ENCODE measurements at regions of chr5 and their contacts with region 1.

Region 1: GRCh38 chr5:108003178-108003577 is 332.4 kb upstream of the EFNA5 start:
- DNase-seq: peak in 5 of 9 donors; percentile 3 to 27 (median 12)
- ATAC-seq: peak; percentile 66
- H3K4me3 ChIP-seq: no peak overlapping the region
- H3K4me3 Mint-ChIP-seq: peak overlapping the region in 9 of 10 donors; percentile 3 to 82 (median 55)
- H3K27ac ChIP-seq: no peak overlapping the region
- H3K27ac Mint-ChIP-seq: peak overlapping the region in 8 of 9 donors; percentile 21 to 72 (median 44)
- H3K4me1 ChIP-seq: peaks cover 0 to 7% of the 10 kb centered on the region in 2 donors
- H3K4me1 Mint-ChIP-seq: peaks cover 6 to 22% (median 14%) of the 10 kb centered on the region in 7 donors
- H3K27me3 ChIP-seq: no peaks in the 10 kb centered on the region
- H3K27me3 Mint-ChIP-seq: no peaks in the 10 kb centered on the region

Region 2: DNA sequence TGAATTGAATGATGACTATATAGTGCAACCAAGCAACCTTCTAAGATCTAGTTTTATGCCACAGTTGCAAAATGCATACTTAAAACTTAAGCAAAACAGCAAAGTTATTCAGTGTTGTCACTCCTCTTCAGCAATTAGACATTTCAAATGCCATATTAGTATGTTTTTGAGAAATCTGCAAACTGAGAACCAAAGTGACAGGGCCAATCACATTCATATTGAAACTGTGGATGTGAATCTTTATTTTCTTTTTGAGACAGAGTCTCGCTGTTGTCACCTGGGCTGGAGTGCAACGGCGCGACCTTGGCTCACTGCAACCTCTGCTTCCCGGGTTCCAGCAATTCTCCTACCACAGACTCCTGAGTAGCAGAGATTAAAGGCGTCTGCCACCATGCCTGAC is 83.2 kb before region 1 on chr5:
- CTCF ChIA-PET with region 1: no interaction called
- POLR2A ChIA-PET with region 1: no interaction called
- intact Hi-C with region 1: loop called in 1 of 2 experiments (anchors 2 kb)
- DNase-seq: no peak
- ATAC-seq: no peak
- H3K4me3 ChIP-seq: no peak overlapping the region
- H3K4me3 Mint-ChIP-seq: peak overlapping the region in 1 of 10 donors; percentile 13
- H3K27ac ChIP-seq: no peak overlapping the region
- H3K27ac Mint-ChIP-seq: peak overlapping the region in 1 of 9 donors; percentile 4
- H3K4me1 ChIP-seq: peaks cover 0 to 5% of the 10 kb centered on the region in 2 donors
- H3K4me1 Mint-ChIP-seq: peaks cover 4 to 54% (median 27%) of the 10 kb centered on the region in 7 donors
- H3K27me3 ChIP-seq: no peaks in the 10 kb centered on the region
- H3K27me3 Mint-ChIP-seq: no peaks in the 10 kb centered on the region

Region 3: GRCh38 chr5:107958856-107959255 is 44.3 kb before region 1 on chr5:
- CTCF ChIA-PET with region 1: no interaction called
- POLR2A ChIA-PET with region 1: no interaction called
- intact Hi-C with region 1: loop called in 1 of 2 experiments (anchors 5 kb)
- DNase-seq: peak in 2 of 9 donors; percentile 35 to 51
- ATAC-seq: no peak
- H3K4me3 ChIP-seq: no peak overlapping the region
- H3K4me3 Mint-ChIP-seq: no peak overlapping the region
- H3K27ac ChIP-seq: no peak overlapping the region
- H3K27ac Mint-ChIP-seq: peak overlapping the region in 4 of 9 donors; percentile 32 to 58 (median 42)
- H3K4me1 ChIP-seq: no peaks in the 10 kb centered on the region
- H3K4me1 Mint-ChIP-seq: peaks cover 2 to 60% (median 25%) of the 10 kb centered on the region in 7 donors
- H3K27me3 ChIP-seq: no peaks in the 10 kb centered on the region
- H3K27me3 Mint-ChIP-seq: no peaks in the 10 kb centered on the region

Region 4: DNA sequence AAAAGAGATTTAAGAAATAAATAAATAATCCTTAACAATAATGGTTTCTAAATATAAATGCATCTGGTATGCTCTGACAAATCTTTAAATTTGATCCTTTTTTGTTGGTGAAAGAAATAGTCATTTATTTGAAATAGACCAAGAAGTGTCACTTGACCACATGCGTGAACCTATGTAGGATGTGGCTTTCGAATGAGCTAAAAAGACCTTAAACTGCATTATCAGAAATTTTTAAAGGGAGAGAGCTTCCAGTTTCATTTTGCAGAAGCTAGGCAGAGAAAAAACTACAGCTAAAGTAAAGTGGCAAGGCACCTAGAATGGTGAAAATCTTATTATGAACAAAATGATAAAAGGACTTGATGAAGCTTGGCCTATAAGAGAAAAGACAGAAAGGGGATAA is 23.3 kb before region 1 on chr5:
- CTCF ChIA-PET with region 1: no interaction called
- POLR2A ChIA-PET with region 1: no interaction called
- intact Hi-C with region 1: loop called in 1 of 2 experiments (anchors 2 kb)
- DNase-seq: no peak
- ATAC-seq: peak; percentile 41
- H3K4me3 ChIP-seq: no peak overlapping the region
- H3K4me3 Mint-ChIP-seq: peak overlapping the region in 2 of 10 donors; percentile 1 to 45
- H3K27ac ChIP-seq: no peak overlapping the region
- H3K27ac Mint-ChIP-seq: no peak overlapping the region
- H3K4me1 ChIP-seq: no peaks in the 10 kb centered on the region
- H3K4me1 Mint-ChIP-seq: peaks cover 0 to 33% (median 0%) of the 10 kb centered on the region in 7 donors
- H3K27me3 ChIP-seq: no peaks in the 10 kb centered on the region
- H3K27me3 Mint-ChIP-seq: no peaks in the 10 kb centered on the region

Region 5: GRCh38 chr5:108024986-108025385 is 21.8 kb after region 1 on chr5:
- CTCF ChIA-PET with region 1: no interaction called
- POLR2A ChIA-PET with region 1: no interaction called
- intact Hi-C with region 1: loop called in 1 of 2 experiments (anchors 1 kb)
- DNase-seq: no peak
- ATAC-seq: no peak
- H3K4me3 ChIP-seq: no peak overlapping the region
- H3K4me3 Mint-ChIP-seq: no peak overlapping the region
- H3K27ac ChIP-seq: no peak overlapping the region
- H3K27ac Mint-ChIP-seq: no peak overlapping the region
- H3K4me1 ChIP-seq: no peaks in the 10 kb centered on the region
- H3K4me1 Mint-ChIP-seq: peaks cover 0 to 5% (median 0%) of the 10 kb centered on the region in 7 donors
- H3K27me3 ChIP-seq: no peaks in the 10 kb centered on the region
- H3K27me3 Mint-ChIP-seq: no peaks in the 10 kb centered on the region

Region 6: DNA sequence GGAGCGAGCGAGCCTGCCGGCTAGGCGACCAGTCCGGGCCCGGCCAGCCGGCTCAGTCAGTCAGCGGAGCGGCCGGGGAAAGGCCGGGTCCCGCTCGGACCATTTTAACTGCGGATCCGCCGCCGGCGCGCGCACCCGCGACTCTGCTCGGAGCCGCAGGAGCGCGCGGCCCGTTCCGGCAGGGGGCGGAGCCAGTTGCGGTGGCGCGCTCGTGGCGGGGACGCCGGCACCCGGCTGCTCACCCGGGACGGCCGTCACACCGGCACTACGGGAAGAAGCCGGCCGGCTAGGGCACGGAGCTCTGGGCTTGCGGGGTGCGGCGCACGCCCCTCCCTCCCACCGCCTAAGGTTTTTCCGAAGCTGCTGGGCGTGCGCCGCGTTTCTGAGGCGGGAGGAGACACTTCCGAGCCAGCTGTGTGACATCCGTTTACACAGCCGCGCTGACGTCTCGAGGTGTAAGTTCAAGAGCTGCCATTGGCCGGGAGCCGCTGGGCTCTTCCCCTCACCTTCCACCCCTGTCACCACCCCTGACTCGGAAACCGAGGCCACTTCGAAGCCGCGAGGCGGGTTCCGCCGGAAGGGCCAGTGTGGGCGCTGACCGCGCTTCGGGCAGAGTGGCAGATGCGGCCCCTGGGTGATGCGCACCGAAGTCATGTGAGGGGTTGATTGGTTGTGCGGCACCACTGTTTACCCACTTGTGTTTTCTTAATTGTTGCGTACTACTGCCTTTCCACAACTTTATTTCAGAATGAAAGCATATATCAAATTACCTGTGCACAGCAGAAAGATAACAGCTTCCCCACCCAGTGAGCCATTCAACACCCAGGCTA is 379.0 kb after region 1 on chr5 and contains the start of gene FBXL17:
- CTCF ChIA-PET with region 1: no interaction called
- POLR2A ChIA-PET with region 1: no interaction called
- intact Hi-C with region 1: loop called in 1 of 2 experiments (anchors 1 kb)
- DNase-seq: peak; percentile 86 to 95 (median 92)
- ATAC-seq: peak; percentile 89
- H3K4me3 ChIP-seq: peak within 1 kb of the TSS; percentile 90
- H3K4me3 Mint-ChIP-seq: peak within 1 kb of the TSS; percentile 80 to 99 (median 91)
- H3K27ac ChIP-seq: peak within 1 kb of the TSS; percentile 88
- H3K27ac Mint-ChIP-seq: peak within 1 kb of the TSS; percentile 90 to 99 (median 97)
- H3K4me1 ChIP-seq: peaks cover 8 to 17% of the 10 kb centered on the region in 2 donors
- H3K4me1 Mint-ChIP-seq: peaks cover 19 to 52% (median 44%) of the 10 kb centered on the region in 7 donors
- H3K27me3 ChIP-seq: no peaks in the 10 kb centered on the region
- H3K27me3 Mint-ChIP-seq: no peaks in the 10 kb centered on the region
- total RNA-seq, gene FBXL17: 14.2 to 28.4 (median 21.7) TPM

Region 7: DNA sequence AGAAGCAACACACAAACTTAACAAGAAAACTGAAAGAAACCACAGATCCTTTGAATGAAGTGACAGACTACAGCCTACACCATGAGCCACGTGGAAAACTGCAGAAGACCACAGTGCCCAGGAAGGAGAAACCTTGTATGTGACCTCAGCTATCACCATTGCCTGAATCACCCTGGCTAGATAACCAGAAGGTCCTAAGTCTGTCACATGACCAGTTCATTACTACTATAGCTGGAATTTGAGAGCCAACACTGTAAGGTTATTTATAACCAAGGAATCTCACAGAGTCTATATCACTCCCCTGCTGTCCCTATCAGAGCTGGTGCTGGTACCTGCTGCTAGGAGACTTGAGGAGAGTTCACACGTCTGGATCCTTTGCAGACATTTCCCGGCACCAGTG is 469.1 kb after region 1 on chr5:
- CTCF ChIA-PET with region 1: no interaction called
- POLR2A ChIA-PET with region 1: no interaction called
- intact Hi-C with region 1: no loop called
- DNase-seq: no peak
- ATAC-seq: no peak
- H3K4me3 ChIP-seq: no peak overlapping the region
- H3K4me3 Mint-ChIP-seq: no peak overlapping the region
- H3K27ac ChIP-seq: no peak overlapping the region
- H3K27ac Mint-ChIP-seq: no peak overlapping the region
- H3K4me1 ChIP-seq: no peaks in the 10 kb centered on the region
- H3K4me1 Mint-ChIP-seq: no peaks in the 10 kb centered on the region
- H3K27me3 ChIP-seq: no peaks in the 10 kb centered on the region
- H3K27me3 Mint-ChIP-seq: peaks cover 5 to 30% (median 19%) of the 10 kb centered on the region in 5 donors